ENCODE measurements at regions of chr10 and their contacts with region 1.

Region 1: GRCh38 chr10:130110246-130111112 is at the start of gene C10orf143:
- DNase-seq: peak; percentile 97
- H3K4me3 Mint-ChIP-seq: peak within 1 kb of the TSS; percentile 97
- H3K27ac Mint-ChIP-seq: peak within 1 kb of the TSS; percentile 95
- H3K4me1 Mint-ChIP-seq: peaks cover 41% of the 10 kb centered on the region
- H3K27me3 Mint-ChIP-seq: no peaks in the 10 kb centered on the region
- total RNA-seq, gene C10orf143: 3.1 and 4.5 TPM in 2 replicates

Region 2: GRCh38 chr10:129466703-129467358 is 643.6 kb before region 1 on chr10 and contains the start of gene MGMT:
- intact Hi-C with region 1: loop called (anchors 2 kb)
- DNase-seq: peak; percentile 93
- H3K4me3 Mint-ChIP-seq: peak within 1 kb of the TSS; percentile 78
- H3K27ac Mint-ChIP-seq: peak within 1 kb of the TSS; percentile 49
- H3K4me1 Mint-ChIP-seq: peaks cover 11% of the 10 kb centered on the region
- H3K27me3 Mint-ChIP-seq: peaks cover 2% of the 10 kb centered on the region
- total RNA-seq, gene MGMT: 15.8 and 17.5 TPM in 2 replicates

Region 3: DNA sequence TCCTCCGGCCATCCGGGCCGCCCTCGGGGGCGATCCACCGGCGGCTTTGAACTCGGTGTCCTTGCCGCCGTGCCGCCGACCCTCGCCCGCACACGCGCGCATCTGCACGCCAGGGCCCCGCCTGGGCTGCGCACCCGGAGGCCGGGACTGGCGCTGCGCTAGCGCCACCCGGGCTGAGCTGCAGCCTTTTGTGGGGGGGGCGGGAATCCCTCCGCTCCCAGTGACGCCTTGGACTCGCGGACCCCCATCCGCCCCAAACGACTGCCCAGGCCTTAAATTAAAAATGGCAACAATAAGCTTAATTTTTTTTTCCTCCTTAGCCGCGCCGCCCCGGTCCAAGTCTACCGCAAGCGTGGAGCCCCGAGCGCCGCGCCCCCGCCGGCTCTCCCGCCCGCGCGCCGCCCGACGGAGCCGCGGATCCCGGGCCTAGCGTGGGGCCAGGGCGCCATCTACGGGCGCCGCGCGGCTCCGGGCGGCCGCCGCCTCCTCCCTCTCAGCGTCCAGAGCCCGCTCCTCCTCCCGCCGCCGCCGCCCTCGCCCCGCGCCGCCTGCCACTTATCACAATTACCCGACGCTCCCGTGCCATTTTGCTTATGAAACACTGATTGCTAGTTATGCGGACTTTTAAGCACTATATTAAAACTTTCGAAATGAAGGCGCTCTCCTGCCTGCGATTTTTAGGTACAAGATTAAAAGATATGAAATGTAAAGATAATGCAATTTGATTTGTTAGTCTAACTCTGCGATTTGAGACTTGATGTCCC is 138.9 kb before region 1 on chr10:
- intact Hi-C with region 1: loop called (anchors 5 kb)
- DNase-seq: no peak
- H3K4me3 Mint-ChIP-seq: peak overlapping the region; percentile 26
- H3K27ac Mint-ChIP-seq: no peak overlapping the region
- H3K4me1 Mint-ChIP-seq: peaks cover 4% of the 10 kb centered on the region
- H3K27me3 Mint-ChIP-seq: peaks cover 60% of the 10 kb centered on the region

Region 4: DNA sequence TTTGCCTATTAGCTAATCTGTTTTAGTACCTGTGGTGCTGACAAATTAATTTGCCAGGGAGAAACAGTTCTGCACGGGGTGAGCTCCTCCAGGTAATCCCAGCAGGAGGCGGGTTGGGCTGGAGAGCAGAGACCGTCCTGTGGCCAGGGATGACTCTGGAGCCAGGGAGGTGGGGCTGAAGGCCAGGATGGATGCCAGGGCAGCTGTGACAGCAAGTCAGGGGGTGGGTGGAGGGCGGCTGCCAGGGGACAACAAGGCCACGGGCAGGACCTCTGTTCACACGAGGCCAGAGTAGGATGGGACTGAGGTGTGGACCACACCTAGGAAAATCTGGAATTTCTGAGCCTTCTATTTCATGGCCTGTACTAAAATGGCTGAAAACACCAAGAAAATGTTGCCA is 48.7 kb before region 1 on chr10:
- intact Hi-C with region 1: no loop called
- DNase-seq: no peak
- H3K4me3 Mint-ChIP-seq: no peak overlapping the region
- H3K27ac Mint-ChIP-seq: no peak overlapping the region
- H3K4me1 Mint-ChIP-seq: no peaks in the 10 kb centered on the region
- H3K27me3 Mint-ChIP-seq: no peaks in the 10 kb centered on the region

Region 5: DNA sequence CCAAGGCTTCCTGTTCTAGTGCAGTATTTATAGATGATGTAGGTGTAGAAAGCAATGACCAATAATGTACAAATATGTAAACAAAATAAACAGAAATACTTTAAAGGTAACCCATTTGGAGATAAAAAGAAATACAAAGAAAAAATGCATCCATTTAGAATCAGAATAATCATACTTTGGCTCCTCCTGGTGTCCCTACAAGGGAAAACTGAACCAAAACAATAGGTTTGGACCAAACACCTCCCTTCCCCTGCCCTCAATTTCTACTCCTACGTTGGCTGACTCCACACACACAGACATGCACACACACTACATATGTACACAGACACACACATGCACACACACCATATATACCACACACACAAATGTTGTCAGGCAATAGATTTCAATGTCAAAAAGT is 35.8 kb before region 1 on chr10:
- intact Hi-C with region 1: no loop called
- DNase-seq: no peak
- H3K4me3 Mint-ChIP-seq: no peak overlapping the region
- H3K27ac Mint-ChIP-seq: no peak overlapping the region
- H3K4me1 Mint-ChIP-seq: no peaks in the 10 kb centered on the region
- H3K27me3 Mint-ChIP-seq: no peaks in the 10 kb centered on the region

Region 6: GRCh38 chr10:130136226-130137089 is 26.0 kb after region 1 on chr10 and contains the start of gene GLRX3:
- intact Hi-C with region 1: loop called (anchors 1 kb)
- DNase-seq: peak; percentile 81
- H3K4me3 Mint-ChIP-seq: peak within 1 kb of the TSS; percentile 92
- H3K27ac Mint-ChIP-seq: peak within 1 kb of the TSS; percentile 88
- H3K4me1 Mint-ChIP-seq: peaks cover 34% of the 10 kb centered on the region
- H3K27me3 Mint-ChIP-seq: no peaks in the 10 kb centered on the region
- total RNA-seq, gene GLRX3: 138 and 145 TPM in 2 replicates

Region 7: DNA sequence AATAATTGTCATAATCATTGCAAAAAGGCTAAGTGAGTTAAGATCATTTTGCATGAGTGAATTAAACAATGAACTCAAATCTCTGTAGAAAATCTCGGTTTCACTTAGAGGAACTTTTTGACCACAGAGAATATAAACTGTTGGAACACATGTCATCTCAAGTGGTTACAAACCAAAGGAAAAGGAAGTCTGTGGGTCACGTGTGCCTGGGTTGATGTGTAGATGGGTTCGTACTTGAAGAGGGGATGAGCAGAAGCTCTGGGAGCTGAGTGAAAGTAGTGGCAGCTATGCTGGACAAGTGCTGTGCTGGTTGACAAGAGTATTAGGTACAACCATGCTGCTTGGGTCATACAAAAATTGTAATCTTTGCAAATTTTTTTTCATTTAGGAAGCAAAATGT is 60.7 kb after region 1 on chr10:
- intact Hi-C with region 1: loop called (anchors 1 kb)
- DNase-seq: peak; percentile 58
- H3K4me3 Mint-ChIP-seq: peak overlapping the region; percentile 5
- H3K27ac Mint-ChIP-seq: no peak overlapping the region
- H3K4me1 Mint-ChIP-seq: peaks cover 69% of the 10 kb centered on the region
- H3K27me3 Mint-ChIP-seq: no peaks in the 10 kb centered on the region

Region 8: DNA sequence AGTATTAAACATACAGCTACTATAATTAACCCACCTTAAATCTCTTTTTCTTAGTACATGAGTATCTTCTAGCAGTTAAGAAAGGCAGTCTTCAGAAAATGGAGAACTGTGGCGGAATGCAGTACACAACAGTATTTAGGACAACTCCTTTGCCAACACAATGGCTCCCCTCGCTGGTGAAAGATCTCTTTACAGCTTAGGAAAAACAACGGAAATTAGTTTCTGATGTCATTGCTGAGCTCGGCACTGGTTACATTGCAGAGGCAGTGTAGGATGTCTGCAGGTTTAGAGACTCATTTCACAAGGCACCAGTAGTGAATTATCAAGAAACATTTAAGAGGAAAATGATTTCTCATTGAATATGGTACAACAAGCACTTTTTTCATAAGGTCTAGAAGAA is 69.2 kb after region 1 on chr10:
- intact Hi-C with region 1: loop called (anchors 2 kb)
- DNase-seq: peak; percentile 33
- H3K4me3 Mint-ChIP-seq: no peak overlapping the region
- H3K27ac Mint-ChIP-seq: peak overlapping the region; percentile 79
- H3K4me1 Mint-ChIP-seq: peaks cover 22% of the 10 kb centered on the region
- H3K27me3 Mint-ChIP-seq: no peaks in the 10 kb centered on the region

Measured in activated T-helper 2 cell treated with anti-CD3 and anti-CD28 coated beads, Interferon-gamma antibody, Interleukin-2, Interleukin-4, amounts not matched to agents 10 μg/mL and 5 μg/mL and 100 μg/mL, durations not matched to agents 14 hours and 24 hours and 36 hours (primary cell).